ENCODE measurements at regions of chr13 and their contacts with region 1.

Region 1: GRCh38 chr13:35255241-35255640 is 221.2 kb downstream of the MAB21L1 start:
- DNase-seq: no peak
- H3K4me3 ChIP-seq: no peak overlapping the region
- H3K27ac ChIP-seq: no peak overlapping the region
- H3K4me1 ChIP-seq: no peaks in the 10 kb centered on the region
- H3K27me3 ChIP-seq: no peaks in the 10 kb centered on the region
- CTCF ChIP-seq: no peak
- POLR2A ChIP-seq: no peak

Region 2: GRCh38 chr13:36650035-36650434 is 1394.8 kb after region 1 on chr13:
- intact Hi-C with region 1: loop called (anchors 5 kb)
- DNase-seq: no peak
- H3K4me3 ChIP-seq: no peak overlapping the region
- H3K27ac ChIP-seq: no peak overlapping the region
- H3K4me1 ChIP-seq: no peaks in the 10 kb centered on the region
- H3K27me3 ChIP-seq: no peaks in the 10 kb centered on the region
- CTCF ChIP-seq: no peak
- POLR2A ChIP-seq: no peak